ENCODE measurements at regions of chr19 and their contacts with region 1.

Region 1: GRCh38 chr19:15555759-15556633 is 47.7 kb downstream of the CYP4F22 start:
- DNase-seq: peak; percentile 96
- H3K4me3 Mint-ChIP-seq: peak overlapping the region; percentile 71
- H3K27ac Mint-ChIP-seq: peak overlapping the region; percentile 87
- H3K4me1 Mint-ChIP-seq: peaks cover 31% of the 10 kb centered on the region
- H3K27me3 Mint-ChIP-seq: no peaks in the 10 kb centered on the region

Region 2: DNA sequence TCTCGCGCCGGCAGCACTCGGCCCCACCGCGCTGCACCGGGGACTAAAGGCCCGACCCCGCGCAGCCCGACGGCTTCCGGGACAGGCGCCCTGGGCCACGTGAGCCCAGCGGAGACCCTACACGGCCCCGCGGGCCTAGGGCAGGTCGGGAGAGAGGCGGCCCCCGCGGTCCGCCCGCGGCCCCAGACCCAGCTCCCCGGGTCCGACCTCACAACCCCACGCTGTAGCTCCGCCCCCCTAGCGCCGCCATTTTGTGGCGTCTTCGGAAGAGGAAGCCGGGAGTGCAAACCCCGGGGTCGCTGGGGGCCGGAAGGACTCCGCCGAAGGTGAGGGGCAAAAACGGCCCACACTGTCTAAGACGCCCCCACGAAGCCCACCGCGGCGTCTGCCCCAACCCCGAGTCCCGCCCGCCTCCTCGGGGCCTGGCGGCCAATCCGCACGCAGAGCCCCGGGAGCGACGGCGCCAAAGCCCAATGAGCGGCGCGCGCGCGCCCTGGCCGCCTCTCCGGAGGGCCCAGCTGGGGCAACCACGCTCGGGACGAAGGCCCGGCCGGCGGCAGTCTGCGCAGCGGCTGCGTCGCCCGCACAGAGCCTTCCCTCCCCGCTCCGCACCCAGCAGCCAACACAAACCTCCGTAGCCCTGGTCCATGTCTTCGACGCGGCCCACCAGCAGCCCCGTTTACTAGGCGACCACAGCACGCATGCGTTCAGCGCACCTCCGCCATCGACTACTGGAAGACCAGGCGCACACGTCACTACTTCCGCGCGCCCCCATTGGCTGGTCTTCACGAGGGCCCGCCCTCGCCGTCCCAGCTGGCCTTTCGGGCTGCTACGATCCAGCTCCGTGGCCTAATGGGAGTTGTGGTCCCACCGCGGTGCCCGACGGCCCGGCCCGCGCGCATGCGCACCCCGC is 176.7 kb before region 1 on chr19 and contains the start of gene AKAP8:
- CTCF ChIA-PET with region 1: interaction called, 18 read pairs
- POLR2A ChIA-PET with region 1: no interaction called
- DNase-seq: peak; percentile 97
- H3K4me3 Mint-ChIP-seq: peak within 1 kb of the TSS; percentile 87
- H3K27ac Mint-ChIP-seq: peak within 1 kb of the TSS; percentile 99
- H3K4me1 Mint-ChIP-seq: peaks cover 32% of the 10 kb centered on the region
- H3K27me3 Mint-ChIP-seq: no peaks in the 10 kb centered on the region
- total RNA-seq, gene AKAP8: 54.5 to 57.1 TPM

Region 3: GRCh38 chr19:15769585-15769984 is 213.6 kb after region 1 on chr19:
- CTCF ChIA-PET with region 1: no interaction called
- POLR2A ChIA-PET with region 1: no interaction called
- DNase-seq: no peak
- H3K4me3 Mint-ChIP-seq: no peak overlapping the region
- H3K27ac Mint-ChIP-seq: no peak overlapping the region
- H3K4me1 Mint-ChIP-seq: no peaks in the 10 kb centered on the region
- H3K27me3 Mint-ChIP-seq: peaks cover 12% of the 10 kb centered on the region